H1 (cell line): ENCODE measurements at regions of chr6 and their contacts with region 1.

Region 1: DNA sequence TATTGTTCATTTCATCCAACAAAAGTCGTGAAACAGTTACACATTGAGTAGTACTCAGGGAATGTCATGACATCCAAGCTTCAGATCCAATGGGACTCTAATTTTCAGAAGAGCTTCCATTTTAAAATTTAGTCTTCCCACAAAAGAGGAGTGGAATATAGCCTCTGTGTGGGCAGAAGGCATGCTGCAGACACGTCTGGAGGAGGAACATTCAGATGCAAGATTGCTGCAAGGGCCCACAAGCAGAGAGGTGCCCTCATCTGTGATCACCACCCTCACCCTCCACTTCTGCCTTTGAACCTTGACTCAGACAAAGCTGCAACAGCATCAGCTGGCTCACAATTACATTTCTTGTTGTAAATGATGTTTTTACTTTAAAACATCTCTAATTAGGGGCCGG is 29.9 kb downstream of the NRN1 start:
- DNase-seq: no peak
- H3K4me3 ChIP-seq: no peak overlapping the region
- H3K27ac ChIP-seq: no peak overlapping the region
- H3K4me1 ChIP-seq: no peaks in the 10 kb centered on the region
- H3K27me3 ChIP-seq: no peaks in the 10 kb centered on the region
- CTCF ChIP-seq: no peak
- EP300 ChIP-seq: no peak
- POLR2A ChIP-seq: no peak
- RAD21 ChIP-seq: no peak

Region 2: GRCh38 chr6:5729080-5729434 is 247.8 kb before region 1 on chr6:
- CTCF ChIA-PET with region 1: no interaction called
- POLR2A ChIA-PET with region 1: no interaction called
- DNase-seq: no peak
- H3K4me3 ChIP-seq: no peak overlapping the region
- H3K27ac ChIP-seq: no peak overlapping the region
- H3K4me1 ChIP-seq: peaks cover 0 to 5% (median 2%) of the 10 kb centered on the region in 4 experiments; a peak in 3 of 7 replicates
- H3K27me3 ChIP-seq: no peaks in the 10 kb centered on the region; a peak in 1 of 7 replicates
- CTCF ChIP-seq: no peak
- EP300 ChIP-seq: no peak
- POLR2A ChIP-seq: no peak
- RAD21 ChIP-seq: no peak

Region 3: GRCh38 chr6:5956939-5957338 is 19.9 kb before region 1 on chr6:
- CTCF ChIA-PET with region 1: interaction called, 13 read pairs
- POLR2A ChIA-PET with region 1: interaction called, 3 read pairs
- DNase-seq: no peak
- H3K4me3 ChIP-seq: no peak overlapping the region
- H3K27ac ChIP-seq: no peak overlapping the region
- H3K4me1 ChIP-seq: no peaks in the 10 kb centered on the region
- H3K27me3 ChIP-seq: no peaks in the 10 kb centered on the region
- CTCF ChIP-seq: peak in 2 of 3 experiments; percentile 11 to 46; a peak in 2 of 4 replicates
- EP300 ChIP-seq: no peak
- POLR2A ChIP-seq: no peak
- RAD21 ChIP-seq: peak; percentile 25 to 33; a peak in 2 of 4 replicates